GM12878 (cell line): ENCODE measurements at regions of chr2 and their contacts with region 1.

Region 1: GRCh38 chr2:58834404-58834803 is 593.3 kb upstream of the FANCL start:
- DNase-seq: no peak
- ATAC-seq: no peak
- H3K4me3 ChIP-seq: no peak overlapping the region
- H3K27ac ChIP-seq: no peak overlapping the region
- H3K4me1 ChIP-seq: no peaks in the 10 kb centered on the region
- H3K27me3 ChIP-seq: no peaks in the 10 kb centered on the region
- CTCF ChIP-seq: no peak
- EP300 ChIP-seq: no peak
- POLR2A ChIP-seq: no peak
- RAD21 ChIP-seq: no peak

Region 2: GRCh38 chr2:58853420-58853819 is 19.0 kb after region 1 on chr2:
- CTCF ChIA-PET with region 1: no interaction called
- POLR2A ChIA-PET with region 1: no interaction called
- RAD21 ChIA-PET with region 1: no interaction called
- SMC1A ChIA-PET with region 1: no interaction called
- in situ Hi-C with region 1: no loop called
- intact Hi-C with region 1: no loop called
- DNase-seq: no peak
- ATAC-seq: no peak
- H3K4me3 ChIP-seq: no peak overlapping the region
- H3K27ac ChIP-seq: no peak overlapping the region
- H3K4me1 ChIP-seq: no peaks in the 10 kb centered on the region
- H3K27me3 ChIP-seq: no peaks in the 10 kb centered on the region
- CTCF ChIP-seq: no peak
- EP300 ChIP-seq: no peak
- POLR2A ChIP-seq: no peak
- RAD21 ChIP-seq: no peak

Region 3: DNA sequence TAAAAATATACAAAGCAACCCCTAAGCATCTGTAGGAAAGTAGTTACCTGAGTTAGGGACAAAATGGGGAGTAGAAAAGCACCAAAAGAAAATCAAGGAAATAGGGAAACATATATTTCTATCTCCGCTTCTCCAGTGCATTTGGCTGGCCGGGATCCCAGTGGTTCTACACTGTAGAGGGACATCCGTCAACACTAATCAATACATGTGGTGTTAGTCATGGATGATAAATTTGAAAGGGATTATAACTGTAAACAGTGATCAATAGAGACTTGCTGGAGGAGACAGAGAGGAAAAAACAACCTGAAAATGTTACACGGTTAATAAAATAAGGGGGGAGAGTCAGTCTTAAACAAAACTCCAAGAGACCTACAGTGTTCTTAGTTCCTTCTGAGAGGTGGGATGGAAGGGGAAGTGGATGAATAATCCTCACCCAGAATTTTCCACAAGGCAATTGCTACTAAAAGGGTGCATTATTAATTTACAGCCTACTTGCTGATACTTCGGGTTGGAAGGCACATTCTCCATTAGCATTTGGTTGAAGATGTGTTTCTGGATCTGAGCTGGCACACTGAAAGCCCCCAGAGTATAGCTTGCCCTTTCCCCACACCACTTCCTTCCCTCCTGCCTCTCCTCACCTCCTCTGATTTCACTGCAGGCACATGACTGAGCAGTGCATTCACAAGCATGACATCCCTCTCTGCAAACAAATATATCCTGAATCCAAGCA is 1189.0 kb after region 1 on chr2:
- CTCF ChIA-PET with region 1: no interaction called
- POLR2A ChIA-PET with region 1: no interaction called
- RAD21 ChIA-PET with region 1: no interaction called
- SMC1A ChIA-PET with region 1: no interaction called
- in situ Hi-C with region 1: no loop called
- intact Hi-C with region 1: loop called (anchors 10 kb)
- DNase-seq: no peak
- ATAC-seq: no peak
- H3K4me3 ChIP-seq: no peak overlapping the region
- H3K27ac ChIP-seq: no peak overlapping the region
- H3K4me1 ChIP-seq: no peaks in the 10 kb centered on the region
- H3K27me3 ChIP-seq: peaks cover 0 to 1% of the 10 kb centered on the region in 2 experiments; a peak in 1 of 4 replicates
- CTCF ChIP-seq: no peak
- EP300 ChIP-seq: no peak
- POLR2A ChIP-seq: no peak
- RAD21 ChIP-seq: no peak